Vagina (tissue), 2 donors: ENCODE measurements at regions of chr16 and their contacts with region 1.

Region 1: GRCh38 chr16:11032922-11033291 is 88.5 kb downstream of the CLEC16A start:
- DNase-seq: peak in 1 of 2 donors; percentile 98
- H3K4me3 ChIP-seq: no peak overlapping the region
- H3K27ac ChIP-seq: peak overlapping the region; percentile 90
- H3K4me1 ChIP-seq: peaks cover 41% of the 10 kb centered on the region
- H3K27me3 ChIP-seq: no peaks in the 10 kb centered on the region
- CTCF ChIP-seq: no peak
- POLR2A ChIP-seq: no peak

Region 2: DNA sequence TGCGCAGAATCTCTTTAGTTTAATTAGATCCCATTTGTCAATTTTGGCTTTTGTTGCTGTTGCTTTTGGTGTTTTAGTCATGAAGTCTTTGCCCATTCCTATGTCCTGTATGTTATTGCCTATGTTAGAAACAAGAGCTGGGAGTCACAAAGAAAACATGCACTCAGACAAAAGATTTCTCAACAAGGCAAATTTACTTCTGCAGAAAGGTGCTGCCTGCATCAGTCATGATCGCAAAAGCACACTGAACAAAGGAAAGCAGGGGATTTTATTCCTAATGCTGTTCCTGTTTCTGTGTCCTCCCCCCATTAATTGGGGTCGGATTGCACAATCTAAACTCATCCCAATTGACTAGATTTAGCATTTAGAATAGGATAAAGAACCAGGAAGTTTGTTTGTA is 591.2 kb before region 1 on chr16:
- intact Hi-C with region 1: no loop called
- DNase-seq: no peak
- H3K4me3 ChIP-seq: no peak overlapping the region
- H3K27ac ChIP-seq: no peak overlapping the region
- H3K4me1 ChIP-seq: no peaks in the 10 kb centered on the region
- H3K27me3 ChIP-seq: no peaks in the 10 kb centered on the region
- CTCF ChIP-seq: no peak
- POLR2A ChIP-seq: no peak

Region 3: GRCh38 chr16:10981697-10982216 is 51.1 kb before region 1 on chr16:
- intact Hi-C with region 1: loop called (anchors 10 kb)
- DNase-seq: no peak
- H3K4me3 ChIP-seq: no peak overlapping the region
- H3K27ac ChIP-seq: no peak overlapping the region
- H3K4me1 ChIP-seq: peaks cover 10% of the 10 kb centered on the region
- H3K27me3 ChIP-seq: no peaks in the 10 kb centered on the region
- CTCF ChIP-seq: no peak
- POLR2A ChIP-seq: no peak